ENCODE measurements at regions of chr13 and their contacts with region 1.

Region 1: GRCh38 chr13:66171920-66172319 is 1058.2 kb downstream of the PCDH9 start:
- DNase-seq: no peak
- ATAC-seq: no peak
- H3K4me3 ChIP-seq: no peak overlapping the region
- H3K4me3 Mint-ChIP-seq: no peak overlapping the region
- H3K27ac ChIP-seq: no peak overlapping the region
- H3K27ac Mint-ChIP-seq: no peak overlapping the region
- H3K4me1 ChIP-seq: no peaks in the 10 kb centered on the region
- H3K4me1 Mint-ChIP-seq: no peaks in the 10 kb centered on the region
- H3K27me3 ChIP-seq: no peaks in the 10 kb centered on the region
- H3K27me3 Mint-ChIP-seq: no peaks in the 10 kb centered on the region
- CTCF ChIP-seq: no peak

Region 2: DNA sequence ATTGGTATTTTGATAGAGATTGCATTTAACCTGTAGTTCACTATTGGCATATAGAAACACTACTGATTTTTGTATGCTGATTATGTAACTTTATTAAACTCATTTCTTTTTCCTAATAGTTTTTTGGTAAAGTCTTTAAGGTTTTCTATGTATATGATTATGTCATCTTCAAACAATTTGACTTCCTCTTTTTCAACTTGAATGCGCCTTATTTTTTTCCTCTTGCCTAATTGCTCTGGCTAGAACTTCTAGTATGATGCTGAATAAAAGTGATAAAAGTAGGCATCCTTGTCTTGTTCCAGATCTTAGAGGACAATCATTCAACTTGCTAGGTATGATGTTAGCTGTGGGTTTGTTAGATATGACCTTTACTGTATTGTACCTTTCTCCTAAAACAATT is 23.3 kb after region 1 on chr13:
- CTCF ChIA-PET with region 1: no interaction called
- POLR2A ChIA-PET with region 1: no interaction called
- intact Hi-C with region 1: loop called in 1 of 2 experiments (anchors 1 kb)
- DNase-seq: no peak
- ATAC-seq: no peak
- H3K4me3 ChIP-seq: no peak overlapping the region
- H3K4me3 Mint-ChIP-seq: no peak overlapping the region
- H3K27ac ChIP-seq: no peak overlapping the region
- H3K27ac Mint-ChIP-seq: no peak overlapping the region
- H3K4me1 ChIP-seq: no peaks in the 10 kb centered on the region
- H3K4me1 Mint-ChIP-seq: no peaks in the 10 kb centered on the region
- H3K27me3 ChIP-seq: no peaks in the 10 kb centered on the region
- H3K27me3 Mint-ChIP-seq: no peaks in the 10 kb centered on the region
- CTCF ChIP-seq: no peak

Region 3: DNA sequence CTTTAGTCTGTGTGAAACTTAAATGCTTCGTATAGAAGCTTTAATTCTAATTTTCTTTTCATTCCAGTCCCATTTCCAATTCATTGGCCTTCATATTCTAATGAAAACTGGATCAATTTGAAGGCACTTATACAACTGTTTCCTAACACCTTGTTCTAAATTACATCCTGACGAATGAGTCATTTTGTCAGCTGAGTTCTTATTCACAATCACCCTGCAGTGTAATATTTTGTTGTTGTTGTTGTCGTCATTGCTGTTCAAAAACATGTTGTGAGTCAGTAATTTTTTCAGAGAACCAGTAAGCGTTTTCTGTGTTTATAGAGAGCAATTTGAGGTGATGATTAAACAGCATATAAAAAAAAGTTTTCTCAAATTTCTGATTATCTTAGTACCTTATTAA is 768.2 kb after region 1 on chr13:
- CTCF ChIA-PET with region 1: no interaction called
- POLR2A ChIA-PET with region 1: no interaction called
- intact Hi-C with region 1: no loop called
- DNase-seq: no peak
- ATAC-seq: no peak
- H3K4me3 ChIP-seq: no peak overlapping the region
- H3K4me3 Mint-ChIP-seq: no peak overlapping the region
- H3K27ac ChIP-seq: no peak overlapping the region
- H3K27ac Mint-ChIP-seq: no peak overlapping the region
- H3K4me1 ChIP-seq: no peaks in the 10 kb centered on the region
- H3K4me1 Mint-ChIP-seq: no peaks in the 10 kb centered on the region
- H3K27me3 ChIP-seq: no peaks in the 10 kb centered on the region
- H3K27me3 Mint-ChIP-seq: no peaks in the 10 kb centered on the region
- CTCF ChIP-seq: no peak

Measured in CD8-positive, alpha-beta T cell (primary cell).